Activated CD4-positive, alpha-beta T cell treated with anti-CD3 and anti-CD28 coated beads, Interleukin-2, amount 10 ng/mL, durations not matched to agents 24 days and 14 days (primary cell): ENCODE measurements at regions of chr3 and their contacts with region 1.

Region 1: DNA sequence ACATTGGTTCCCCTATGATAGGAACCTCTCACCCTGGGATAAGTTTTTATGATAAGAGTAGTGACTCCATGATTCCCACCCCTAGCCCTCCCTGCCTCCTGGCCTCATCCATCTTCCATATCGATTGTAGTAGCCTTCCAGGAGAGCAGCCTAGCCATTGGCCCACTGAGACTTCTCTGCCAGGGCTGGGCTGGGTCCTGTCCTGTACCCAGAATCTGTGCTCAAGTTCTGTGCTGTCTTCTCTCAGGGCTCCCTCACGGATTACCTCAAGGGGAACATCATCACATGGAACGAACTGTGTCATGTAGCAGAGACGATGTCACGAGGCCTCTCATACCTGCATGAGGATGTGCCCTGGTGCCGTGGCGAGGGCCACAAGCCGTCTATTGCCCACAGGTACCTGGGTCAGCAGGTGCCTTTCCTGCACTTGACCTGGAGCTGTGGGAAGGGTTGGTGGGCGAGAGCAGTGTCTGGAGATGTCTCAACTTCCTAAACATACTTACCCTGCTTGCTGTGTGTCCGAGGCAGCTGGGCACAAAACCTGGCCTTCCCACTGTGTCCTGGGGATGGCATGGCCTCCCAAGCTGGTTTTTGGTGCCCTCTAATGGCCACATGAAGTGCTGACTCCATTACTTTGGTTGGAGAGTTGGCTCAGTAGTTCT is 16.6 kb upstream of the EXOG start:
- DNase-seq: peak; percentile 85
- H3K4me3 Mint-ChIP-seq: no peak overlapping the region
- H3K27ac Mint-ChIP-seq: no peak overlapping the region
- H3K4me1 Mint-ChIP-seq: no peaks in the 10 kb centered on the region
- H3K27me3 Mint-ChIP-seq: no peaks in the 10 kb centered on the region

Region 2: DNA sequence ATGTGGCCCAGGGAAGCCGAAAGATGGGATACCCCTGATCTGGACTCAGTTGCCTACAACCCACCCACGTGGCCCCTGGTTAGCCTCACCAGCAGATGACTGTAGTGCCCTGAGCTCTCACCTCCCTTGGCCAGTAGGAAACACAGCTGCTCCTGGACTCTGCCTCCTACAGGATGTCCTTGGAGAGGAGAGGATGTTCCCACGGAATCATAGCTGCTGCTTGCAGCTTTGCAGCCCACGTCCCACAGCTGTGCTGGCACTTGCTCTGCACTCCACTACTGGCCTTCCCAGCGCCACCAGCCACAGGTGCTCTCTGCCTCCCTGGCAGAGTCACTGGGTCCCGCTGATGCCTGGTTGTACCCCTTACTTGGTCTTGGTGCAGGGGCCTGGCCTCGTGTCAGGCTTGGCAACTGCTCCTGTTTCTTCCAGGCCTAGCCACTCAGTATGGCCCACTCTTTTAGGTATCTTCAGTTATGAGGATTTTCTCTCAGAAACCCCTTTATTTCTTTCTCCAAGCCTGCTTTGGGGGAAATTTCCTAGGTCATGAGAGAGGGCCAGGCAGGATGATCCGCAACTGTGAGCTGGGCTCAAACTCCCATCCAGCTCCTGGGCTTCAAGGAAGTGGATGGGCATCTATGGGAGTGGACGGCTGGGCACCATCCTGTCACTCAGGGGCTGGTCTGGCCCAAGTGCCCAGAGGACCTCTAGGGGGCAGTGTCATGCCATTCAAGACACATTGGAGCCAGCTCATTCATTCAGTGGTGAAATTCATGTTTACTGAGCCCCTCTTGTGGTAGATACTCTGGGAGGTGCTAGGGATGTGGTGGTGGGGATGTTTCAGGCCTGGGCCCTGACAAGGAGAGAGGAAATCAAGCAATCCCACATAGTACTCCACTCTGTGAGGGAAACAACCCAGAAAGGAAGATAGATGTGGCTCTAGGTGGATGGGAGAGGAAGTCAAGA is 505.2 kb before region 1 on chr3:
- intact Hi-C with region 1: loop called (anchors 10 kb)
- DNase-seq: peak; percentile 91
- H3K4me3 Mint-ChIP-seq: no peak overlapping the region
- H3K27ac Mint-ChIP-seq: no peak overlapping the region
- H3K4me1 Mint-ChIP-seq: peaks cover 4% of the 10 kb centered on the region
- H3K27me3 Mint-ChIP-seq: no peaks in the 10 kb centered on the region

Region 3: DNA sequence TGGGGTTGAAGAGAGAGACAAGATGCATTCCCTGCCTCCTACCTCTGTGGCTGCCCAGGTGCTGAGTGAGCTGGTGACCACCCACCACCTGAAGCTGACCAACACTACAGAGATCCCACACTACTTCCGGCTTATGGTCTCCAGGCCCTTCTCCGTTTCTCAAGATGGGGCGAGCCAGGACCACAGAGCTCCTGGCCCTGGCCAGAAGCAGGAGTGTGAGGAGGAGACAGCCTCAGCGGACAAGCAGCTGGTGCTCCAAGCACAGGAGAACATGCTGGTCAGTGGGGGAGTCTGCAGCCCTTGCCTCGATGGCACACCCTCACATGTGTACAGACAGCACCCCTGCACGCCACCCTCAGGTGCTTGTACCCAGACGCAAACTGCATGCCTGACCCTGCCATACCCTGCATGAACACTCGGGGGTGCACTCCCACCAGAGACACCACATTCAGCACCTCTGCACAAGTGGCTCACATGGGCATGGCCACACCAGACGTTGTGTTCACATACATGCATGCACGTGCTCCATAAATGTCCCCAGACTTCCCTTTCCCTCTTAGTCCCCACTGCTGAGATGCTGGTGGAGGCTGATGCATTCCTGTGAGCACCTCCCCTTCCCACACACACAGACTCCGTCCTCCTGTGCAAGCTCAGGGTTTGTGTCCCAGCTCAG is 361.7 kb before region 1 on chr3:
- intact Hi-C with region 1: loop called (anchors 1 kb)
- DNase-seq: peak; percentile 92
- H3K4me3 Mint-ChIP-seq: no peak overlapping the region
- H3K27ac Mint-ChIP-seq: no peak overlapping the region
- H3K4me1 Mint-ChIP-seq: peaks cover 9% of the 10 kb centered on the region
- H3K27me3 Mint-ChIP-seq: no peaks in the 10 kb centered on the region

Region 4: GRCh38 chr3:38521391-38521987 is 41.9 kb after region 1 on chr3:
- intact Hi-C with region 1: no loop called
- DNase-seq: peak; percentile 87
- H3K4me3 Mint-ChIP-seq: no peak overlapping the region
- H3K27ac Mint-ChIP-seq: no peak overlapping the region
- H3K4me1 Mint-ChIP-seq: peaks cover 25% of the 10 kb centered on the region
- H3K27me3 Mint-ChIP-seq: no peaks in the 10 kb centered on the region